H1 (cell line): ENCODE measurements at regions of chr17 and their contacts with region 1.

Region 1: DNA sequence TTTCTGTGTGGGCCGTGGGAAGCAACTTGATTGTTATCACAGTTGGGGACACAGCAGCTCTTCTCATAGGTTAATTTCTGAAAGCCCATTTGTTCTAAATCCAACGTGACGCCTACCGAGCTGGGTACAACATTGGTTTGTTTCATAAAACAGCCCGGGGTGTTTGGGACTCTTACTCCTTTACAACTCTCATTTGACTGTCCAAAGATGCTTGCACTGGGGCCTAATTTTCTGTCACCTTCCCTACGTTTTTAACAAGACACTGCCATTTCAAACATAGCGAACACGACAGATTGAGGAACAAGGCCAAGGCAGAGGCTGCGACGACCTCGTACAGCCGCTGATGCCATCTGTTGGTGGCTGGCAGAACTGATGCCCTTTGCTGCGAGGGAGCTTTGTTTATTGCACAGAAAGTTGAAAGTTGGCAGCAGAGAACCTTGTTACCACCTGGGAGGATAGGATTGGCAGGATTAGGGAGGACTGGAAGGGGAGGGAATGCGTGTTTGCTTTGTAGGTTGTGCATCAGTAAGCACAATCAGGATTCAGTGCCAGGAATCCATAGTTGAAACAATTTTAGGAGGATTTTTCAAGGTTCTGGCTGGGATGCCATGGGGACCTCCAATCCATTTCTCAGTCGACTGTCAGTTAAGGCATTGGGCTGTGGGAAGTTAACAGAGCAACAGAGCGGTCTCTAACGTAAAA is 98.3 kb downstream of the PITPNC1 start:
- DNase-seq: peak; percentile 47 to 82
- H3K4me3 ChIP-seq: no peak overlapping the region
- H3K27ac ChIP-seq: no peak overlapping the region
- H3K4me1 ChIP-seq: peaks cover 0 to 20% (median 12%) of the 10 kb centered on the region in 4 experiments; a peak in 6 of 7 replicates
- H3K27me3 ChIP-seq: no peaks in the 10 kb centered on the region
- CTCF ChIP-seq: peak; percentile 84 to 99 (median 96)
- EP300 ChIP-seq: no peak
- POLR2A ChIP-seq: no peak
- RAD21 ChIP-seq: peak; percentile 85 to 89

Region 2: GRCh38 chr17:67376737-67377487 is 98.5 kb before region 1 on chr17 and contains the start of gene PITPNC1:
- CTCF ChIA-PET with region 1: interaction called, 14 read pairs
- POLR2A ChIA-PET with region 1: interaction called, 4 read pairs
- DNase-seq: peak in 1 of 2 experiments; percentile 89
- H3K4me3 ChIP-seq: peak within 1 kb of the TSS; percentile 80 to 95 (median 91)
- H3K27ac ChIP-seq: peak within 1 kb of the TSS; percentile 77
- H3K4me1 ChIP-seq: peaks cover 2 to 5% (median 4%) of the 10 kb centered on the region in 4 experiments; a peak in 6 of 7 replicates
- H3K27me3 ChIP-seq: no peaks in the 10 kb centered on the region
- CTCF ChIP-seq: no peak
- EP300 ChIP-seq: no peak
- POLR2A ChIP-seq: peak; percentile 70 to 76
- RAD21 ChIP-seq: no peak
- total RNA-seq, gene PITPNC1: 53.8 and 54.7 TPM in 2 replicates

Region 3: GRCh38 chr17:67400193-67400592 is 75.2 kb before region 1 on chr17:
- CTCF ChIA-PET with region 1: no interaction called
- POLR2A ChIA-PET with region 1: no interaction called
- DNase-seq: no peak
- H3K4me3 ChIP-seq: no peak overlapping the region
- H3K27ac ChIP-seq: no peak overlapping the region
- H3K4me1 ChIP-seq: peaks cover 0 to 7% (median 2%) of the 10 kb centered on the region in 4 experiments; a peak in 2 of 7 replicates
- H3K27me3 ChIP-seq: no peaks in the 10 kb centered on the region
- CTCF ChIP-seq: no peak
- EP300 ChIP-seq: no peak
- POLR2A ChIP-seq: no peak
- RAD21 ChIP-seq: no peak

Region 4: GRCh38 chr17:67456103-67456502 is 19.3 kb before region 1 on chr17:
- CTCF ChIA-PET with region 1: interaction called, 12 read pairs
- POLR2A ChIA-PET with region 1: no interaction called
- DNase-seq: no peak
- H3K4me3 ChIP-seq: no peak overlapping the region
- H3K27ac ChIP-seq: no peak overlapping the region
- H3K4me1 ChIP-seq: no peaks in the 10 kb centered on the region
- H3K27me3 ChIP-seq: no peaks in the 10 kb centered on the region
- CTCF ChIP-seq: no peak
- EP300 ChIP-seq: no peak
- POLR2A ChIP-seq: no peak
- RAD21 ChIP-seq: no peak

Region 5: GRCh38 chr17:67488161-67488560 is 12.8 kb after region 1 on chr17:
- CTCF ChIA-PET with region 1: interaction called, 27 read pairs
- POLR2A ChIA-PET with region 1: interaction called, 4 read pairs
- DNase-seq: no peak
- H3K4me3 ChIP-seq: no peak overlapping the region
- H3K27ac ChIP-seq: no peak overlapping the region
- H3K4me1 ChIP-seq: peaks cover 7 to 14% (median 11%) of the 10 kb centered on the region in 4 experiments
- H3K27me3 ChIP-seq: no peaks in the 10 kb centered on the region
- CTCF ChIP-seq: no peak
- EP300 ChIP-seq: no peak
- POLR2A ChIP-seq: no peak
- RAD21 ChIP-seq: no peak

Region 6: GRCh38 chr17:67602956-67603355 is 127.6 kb after region 1 on chr17:
- CTCF ChIA-PET with region 1: interaction called, 17 read pairs
- POLR2A ChIA-PET with region 1: no interaction called
- DNase-seq: peak; percentile 21 to 57
- H3K4me3 ChIP-seq: no peak overlapping the region
- H3K27ac ChIP-seq: no peak overlapping the region
- H3K4me1 ChIP-seq: peaks cover 0 to 4% (median 0%) of the 10 kb centered on the region in 4 experiments; a peak in 2 of 7 replicates
- H3K27me3 ChIP-seq: no peaks in the 10 kb centered on the region
- CTCF ChIP-seq: peak; percentile 44 to 84 (median 81)
- EP300 ChIP-seq: no peak
- POLR2A ChIP-seq: no peak
- RAD21 ChIP-seq: peak; percentile 89 to 91